A549 (cell line): ENCODE measurements at regions of chr3 and their contacts with region 1.

Region 1: GRCh38 chr3:46078712-46079400 is 51.6 kb upstream of the XCR1 start:
- DNase-seq: peak; percentile 60 to 84
- ATAC-seq: peak; percentile 98 to 99
- H3K4me3 ChIP-seq: no peak overlapping the region
- H3K27ac ChIP-seq: no peak overlapping the region
- H3K4me1 ChIP-seq: no peaks in the 10 kb centered on the region
- CTCF ChIP-seq: peak; percentile 100
- EP300 ChIP-seq: no peak
- POLR2A ChIP-seq: no peak
- RAD21 ChIP-seq: peak; percentile 95 to 98

Region 2: DNA sequence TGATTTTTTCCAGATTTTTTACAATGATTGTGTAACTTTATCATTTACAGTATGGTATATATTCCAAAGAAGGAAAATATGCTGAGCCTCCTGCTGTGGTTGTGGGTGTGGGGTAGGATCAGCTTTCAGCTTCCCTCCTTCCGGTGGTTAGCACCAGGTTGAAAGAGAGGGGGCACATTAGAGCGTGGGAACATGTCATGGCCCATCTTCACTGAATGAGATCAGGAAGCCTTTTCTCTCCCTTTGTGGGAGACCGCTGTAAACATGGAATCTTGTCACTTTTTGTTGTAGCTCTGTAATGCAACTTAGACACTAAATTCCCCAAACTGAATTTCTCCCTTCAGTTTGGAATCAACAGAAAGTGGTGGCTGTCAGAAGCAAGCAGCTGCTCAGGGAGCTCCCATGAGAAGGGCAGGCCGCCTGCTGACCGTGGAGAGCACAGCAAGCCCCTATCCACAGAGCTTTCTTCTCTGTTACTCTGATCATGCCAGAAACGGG is 571.0 kb before region 1 on chr3:
- CTCF ChIA-PET with region 1: interaction called, 15 read pairs
- POLR2A ChIA-PET with region 1: no interaction called
- DNase-seq: peak in 1 of 2 experiments; percentile 27
- ATAC-seq: peak; percentile 69 to 82; a peak in 5 of 6 replicates
- H3K4me3 ChIP-seq: no peak overlapping the region
- H3K27ac ChIP-seq: no peak overlapping the region
- H3K4me1 ChIP-seq: 0 out of 3 replicates have a peak, but pooled peaks cover 7% of the 10 kb centered on the region
- CTCF ChIP-seq: no peak
- EP300 ChIP-seq: no peak
- POLR2A ChIP-seq: no peak
- RAD21 ChIP-seq: no peak; a peak in 1 of 5 replicates

Region 3: GRCh38 chr3:45760878-45761711 is 317.8 kb before region 1 on chr3:
- CTCF ChIA-PET with region 1: interaction called, 38 read pairs
- POLR2A ChIA-PET with region 1: no interaction called
- DNase-seq: peak; percentile 64 to 71
- ATAC-seq: peak; percentile 95 to 97
- H3K4me3 ChIP-seq: no peak overlapping the region
- H3K27ac ChIP-seq: no peak overlapping the region
- H3K4me1 ChIP-seq: no peaks in the 10 kb centered on the region
- CTCF ChIP-seq: peak; percentile 63
- EP300 ChIP-seq: no peak
- POLR2A ChIP-seq: no peak
- RAD21 ChIP-seq: peak; percentile 73 to 79

Region 4: DNA sequence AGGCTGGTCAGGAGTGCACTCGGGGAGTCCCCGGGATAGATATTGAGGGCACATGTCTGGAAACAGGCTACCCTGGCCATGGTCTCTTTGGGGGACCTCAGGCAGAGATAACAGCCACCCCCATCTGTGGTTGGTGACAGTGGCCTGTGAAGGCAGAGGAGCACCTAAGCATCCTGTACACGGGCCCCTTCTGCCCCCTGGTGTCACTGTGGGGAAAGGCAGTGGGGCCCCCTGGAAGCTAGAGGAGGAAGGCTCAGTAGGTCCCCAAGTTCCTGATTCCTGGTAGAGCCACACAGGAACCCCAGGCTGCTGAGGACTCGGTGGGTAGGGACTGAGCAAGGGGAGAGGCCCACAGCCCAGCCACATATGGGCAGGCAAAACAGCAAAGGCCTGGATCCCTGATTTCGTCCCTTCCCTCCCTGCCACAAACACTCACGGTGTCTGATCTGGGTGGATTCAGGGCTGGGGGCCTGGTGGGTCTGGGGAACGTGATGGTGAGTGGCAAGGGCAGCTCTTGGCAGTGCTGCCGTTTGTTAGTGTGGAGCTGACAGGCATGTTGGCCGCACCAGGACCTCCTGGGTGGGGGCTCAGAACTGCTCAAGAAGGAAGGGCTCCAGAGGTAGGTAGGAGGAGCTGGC is 149.7 kb before region 1 on chr3:
- CTCF ChIA-PET with region 1: interaction called, 45 read pairs
- POLR2A ChIA-PET with region 1: no interaction called
- DNase-seq: peak; percentile 11 to 73
- ATAC-seq: peak; percentile 94 to 97; a peak in 5 of 6 replicates
- H3K4me3 ChIP-seq: no peak overlapping the region
- H3K27ac ChIP-seq: no peak overlapping the region
- H3K4me1 ChIP-seq: no peaks in the 10 kb centered on the region
- CTCF ChIP-seq: peak; percentile 57
- EP300 ChIP-seq: no peak
- POLR2A ChIP-seq: no peak
- RAD21 ChIP-seq: peak; percentile 74 to 82

Region 5: DNA sequence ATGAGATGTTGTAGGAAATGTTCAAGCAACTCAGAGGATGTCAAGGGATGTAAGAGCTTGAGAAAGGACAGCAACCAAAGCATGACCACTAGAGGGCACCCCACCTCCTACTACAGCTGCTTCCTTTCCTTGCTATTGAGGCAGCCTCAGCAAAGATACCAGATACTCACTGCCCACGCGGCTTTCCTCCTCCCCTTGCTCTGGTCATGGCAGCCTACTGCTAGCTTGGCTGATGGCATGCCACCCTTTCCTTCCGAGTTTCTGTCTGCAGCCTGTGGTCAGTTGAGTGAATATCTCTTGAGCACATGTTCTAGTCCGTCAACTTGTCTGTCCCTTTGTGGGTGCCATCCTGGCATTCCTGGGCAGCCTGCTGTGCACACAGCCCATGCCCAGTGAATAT is 140.0 kb before region 1 on chr3:
- CTCF ChIA-PET with region 1: interaction called, 192 read pairs
- POLR2A ChIA-PET with region 1: no interaction called
- DNase-seq: peak; percentile 40 to 80
- ATAC-seq: peak; percentile 94 to 95
- H3K4me3 ChIP-seq: no peak overlapping the region
- H3K27ac ChIP-seq: no peak overlapping the region
- H3K4me1 ChIP-seq: no peaks in the 10 kb centered on the region
- CTCF ChIP-seq: peak; percentile 84
- EP300 ChIP-seq: no peak
- POLR2A ChIP-seq: no peak
- RAD21 ChIP-seq: peak; percentile 77 to 83

Region 6: GRCh38 chr3:45946307-45946706 is 132.5 kb before region 1 on chr3:
- CTCF ChIA-PET with region 1: interaction called, 192 read pairs
- POLR2A ChIA-PET with region 1: no interaction called
- DNase-seq: no peak
- ATAC-seq: no peak
- H3K4me3 ChIP-seq: no peak overlapping the region
- H3K27ac ChIP-seq: no peak overlapping the region
- H3K4me1 ChIP-seq: no peaks in the 10 kb centered on the region
- CTCF ChIP-seq: no peak
- EP300 ChIP-seq: no peak
- POLR2A ChIP-seq: no peak
- RAD21 ChIP-seq: no peak

Region 7: DNA sequence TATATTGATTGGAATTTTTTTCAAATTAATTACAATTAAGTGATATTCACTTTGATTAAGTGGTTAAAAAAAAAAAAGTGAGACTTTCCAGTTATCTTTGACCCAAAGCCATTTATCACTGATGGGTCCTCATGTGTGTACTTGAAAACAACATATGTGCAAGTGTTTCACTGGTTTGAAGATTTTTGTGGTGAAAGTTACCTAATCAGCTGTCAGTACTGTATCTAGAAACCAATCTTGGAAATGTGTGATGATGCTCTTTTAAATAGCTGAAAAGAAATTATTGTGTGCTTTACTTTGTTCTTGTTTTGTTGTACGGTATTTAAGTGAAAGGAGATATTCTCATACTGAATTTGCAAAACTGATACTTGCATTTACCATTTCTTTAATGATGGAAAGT is 39.9 kb before region 1 on chr3:
- CTCF ChIA-PET with region 1: no interaction called
- POLR2A ChIA-PET with region 1: no interaction called
- DNase-seq: no peak
- ATAC-seq: no peak
- H3K4me3 ChIP-seq: no peak overlapping the region
- H3K27ac ChIP-seq: no peak overlapping the region
- H3K4me1 ChIP-seq: no peaks in the 10 kb centered on the region
- CTCF ChIP-seq: no peak
- EP300 ChIP-seq: no peak
- POLR2A ChIP-seq: no peak
- RAD21 ChIP-seq: no peak

Region 8: GRCh38 chr3:46065294-46065721 is 13.5 kb before region 1 on chr3:
- CTCF ChIA-PET with region 1: interaction called, 53 read pairs
- POLR2A ChIA-PET with region 1: no interaction called
- DNase-seq: no peak
- ATAC-seq: no peak
- H3K4me3 ChIP-seq: no peak overlapping the region
- H3K27ac ChIP-seq: no peak overlapping the region
- H3K4me1 ChIP-seq: no peaks in the 10 kb centered on the region
- CTCF ChIP-seq: no peak
- EP300 ChIP-seq: no peak
- POLR2A ChIP-seq: no peak
- RAD21 ChIP-seq: no peak

Region 9: GRCh38 chr3:46186471-46187340 is 107.8 kb after region 1 on chr3:
- CTCF ChIA-PET with region 1: no interaction called
- POLR2A ChIA-PET with region 1: no interaction called
- DNase-seq: no peak
- ATAC-seq: no peak
- H3K4me3 ChIP-seq: no peak overlapping the region
- H3K27ac ChIP-seq: no peak overlapping the region
- H3K4me1 ChIP-seq: no peaks in the 10 kb centered on the region
- CTCF ChIP-seq: no peak
- EP300 ChIP-seq: no peak
- POLR2A ChIP-seq: no peak
- RAD21 ChIP-seq: no peak